B cell (primary cell): ENCODE measurements at regions of chr2 and their contacts with region 1.

Region 1: DNA sequence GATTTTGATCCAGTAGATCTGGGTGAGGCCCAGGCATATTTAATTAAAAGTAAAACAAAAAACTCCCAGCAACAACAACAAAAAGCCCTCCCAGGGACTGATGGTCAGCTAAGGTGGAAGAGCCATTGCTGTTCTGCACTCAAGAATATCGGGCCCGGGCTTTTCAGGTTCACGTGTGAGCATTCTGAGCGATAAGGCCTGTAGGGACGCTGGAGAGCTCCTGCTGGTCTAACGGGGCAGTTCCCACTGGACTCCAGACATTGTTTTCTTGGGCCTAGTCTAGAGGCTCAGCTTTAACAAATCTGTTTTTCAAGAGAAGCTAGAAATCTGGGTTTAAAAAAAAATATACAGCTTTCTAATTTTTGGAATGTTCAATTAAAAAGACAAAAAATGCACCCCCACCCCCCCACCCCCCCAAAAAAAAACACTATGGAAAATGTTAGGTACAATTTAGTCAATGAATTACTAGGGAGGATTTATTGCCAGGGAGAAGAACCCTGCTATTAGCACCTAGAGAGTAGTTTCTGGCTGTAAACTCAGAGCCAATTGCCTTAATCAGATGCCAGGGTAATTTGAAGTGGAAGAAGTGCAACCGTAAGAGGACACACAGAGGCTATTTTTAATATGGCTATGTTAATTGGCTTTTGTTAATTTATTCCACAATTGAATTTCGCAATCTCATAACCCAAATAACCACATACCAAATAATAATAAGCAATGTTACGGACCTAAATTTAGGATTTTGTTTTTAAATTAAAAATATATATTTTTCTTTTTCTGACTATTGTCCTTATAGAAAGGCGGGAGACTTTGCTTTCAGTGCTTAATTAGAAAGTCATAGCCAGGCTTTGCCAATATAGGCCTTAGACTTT is 78.9 kb downstream of the MAP4K4 start:
- DNase-seq: no peak
- ATAC-seq: no peak
- H3K4me3 ChIP-seq: no peak overlapping the region
- H3K4me3 Mint-ChIP-seq: no peak overlapping the region
- H3K27ac ChIP-seq: no peak overlapping the region
- H3K27ac Mint-ChIP-seq: no peak overlapping the region
- H3K4me1 ChIP-seq: peaks cover 79 to 87% of the 10 kb centered on the region in 2 donors
- H3K4me1 Mint-ChIP-seq: peaks cover 91% of the 10 kb centered on the region
- H3K27me3 ChIP-seq: no peaks in the 10 kb centered on the region
- H3K27me3 Mint-ChIP-seq: no peaks in the 10 kb centered on the region
- CTCF ChIP-seq: no peak

Region 2: DNA sequence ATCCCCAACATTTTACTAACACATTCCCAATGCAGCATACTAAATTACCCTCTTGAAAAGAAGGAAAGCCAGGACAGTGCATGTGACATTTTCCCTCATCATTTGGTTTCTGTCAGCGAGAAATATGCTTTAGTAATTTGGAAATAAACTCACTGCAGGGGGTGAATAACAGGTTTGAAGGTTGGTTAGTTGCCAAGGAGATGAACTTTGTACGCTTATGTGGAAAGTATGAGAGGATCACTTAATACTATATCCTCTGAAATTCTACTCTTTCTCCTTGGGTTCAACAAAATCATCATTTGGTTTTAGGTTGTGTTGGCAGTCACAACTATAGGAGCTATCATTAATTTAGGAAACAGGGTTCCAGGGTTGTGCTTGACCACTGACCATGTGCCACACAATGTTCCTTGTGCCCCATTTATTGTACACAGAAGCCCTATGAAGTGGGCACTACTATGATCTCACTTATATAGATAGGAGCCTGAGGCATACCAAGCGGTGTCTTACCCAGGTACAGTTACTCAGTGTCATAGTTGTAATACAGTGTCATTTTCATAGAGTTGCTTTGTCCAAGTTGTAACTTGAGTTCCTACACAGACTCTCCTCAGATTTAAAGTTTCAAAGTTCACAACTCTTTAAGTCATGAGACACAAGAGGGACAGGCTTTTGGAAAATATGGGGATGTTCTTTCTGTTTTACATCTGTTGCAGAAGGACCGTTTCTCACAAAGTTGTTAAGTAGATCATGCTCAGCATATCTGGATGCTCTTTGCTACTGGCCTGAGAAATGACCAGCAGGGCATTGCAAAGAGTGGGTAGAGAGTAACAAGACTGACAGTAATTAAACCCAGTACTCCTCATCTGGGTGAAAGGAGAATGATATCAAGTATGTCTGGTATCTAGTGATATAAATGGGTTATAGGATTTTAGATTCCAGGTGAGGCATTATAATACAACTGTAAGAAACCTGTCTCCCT is 12.9 kb after region 1 on chr2:
- CTCF ChIA-PET with region 1: interaction called, 3 read pairs
- POLR2A ChIA-PET with region 1: interaction called, 12 read pairs
- intact Hi-C with region 1: no loop called
- DNase-seq: no peak
- ATAC-seq: no peak
- H3K4me3 ChIP-seq: no peak overlapping the region
- H3K4me3 Mint-ChIP-seq: no peak overlapping the region
- H3K27ac ChIP-seq: peak overlapping the region in 1 of 2 donors; percentile 42
- H3K27ac Mint-ChIP-seq: peak overlapping the region; percentile 56
- H3K4me1 ChIP-seq: peaks cover 20 to 29% of the 10 kb centered on the region in 2 donors
- H3K4me1 Mint-ChIP-seq: peaks cover 79% of the 10 kb centered on the region
- H3K27me3 ChIP-seq: no peaks in the 10 kb centered on the region
- H3K27me3 Mint-ChIP-seq: no peaks in the 10 kb centered on the region
- CTCF ChIP-seq: no peak

Region 3: DNA sequence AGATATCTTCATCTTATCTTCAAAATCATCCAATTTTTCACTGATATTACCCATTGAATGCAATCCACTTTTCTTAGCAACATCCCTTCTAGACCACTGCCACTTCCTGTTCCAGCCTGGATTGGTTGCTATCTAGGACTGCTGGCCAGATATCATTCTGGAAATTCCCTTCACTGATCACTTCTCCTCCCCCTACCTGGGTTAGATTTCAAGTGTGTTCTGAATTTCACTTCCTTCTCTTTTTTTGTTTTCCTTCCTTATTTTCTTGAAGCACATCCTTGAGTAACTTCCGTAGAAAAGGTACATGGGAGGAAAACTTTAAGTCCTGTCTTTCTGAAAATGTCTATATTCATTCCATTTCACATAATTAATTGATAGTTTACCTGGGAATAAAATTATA is 133.4 kb after region 1 on chr2:
- CTCF ChIA-PET with region 1: no interaction called
- POLR2A ChIA-PET with region 1: no interaction called
- intact Hi-C with region 1: no loop called
- DNase-seq: no peak
- ATAC-seq: no peak
- H3K4me3 ChIP-seq: no peak overlapping the region
- H3K4me3 Mint-ChIP-seq: no peak overlapping the region
- H3K27ac ChIP-seq: no peak overlapping the region
- H3K27ac Mint-ChIP-seq: no peak overlapping the region
- H3K4me1 ChIP-seq: peaks cover 12 to 16% of the 10 kb centered on the region in 2 donors
- H3K4me1 Mint-ChIP-seq: peaks cover 22% of the 10 kb centered on the region
- H3K27me3 ChIP-seq: no peaks in the 10 kb centered on the region
- H3K27me3 Mint-ChIP-seq: no peaks in the 10 kb centered on the region
- CTCF ChIP-seq: no peak